ENCODE measurements at regions of chr1 and their contacts with region 1.

Region 1: GRCh38 chr1:29513357-29513756 is 277.0 kb downstream of the PTPRU start:
- DNase-seq: peak; percentile 67
- H3K4me3 ChIP-seq: no peak overlapping the region
- H3K27ac ChIP-seq: no peak overlapping the region
- H3K4me1 ChIP-seq: no peaks in the 10 kb centered on the region
- H3K27me3 ChIP-seq: no peaks in the 10 kb centered on the region
- CTCF ChIP-seq: peak; percentile 94 to 96

Region 2: DNA sequence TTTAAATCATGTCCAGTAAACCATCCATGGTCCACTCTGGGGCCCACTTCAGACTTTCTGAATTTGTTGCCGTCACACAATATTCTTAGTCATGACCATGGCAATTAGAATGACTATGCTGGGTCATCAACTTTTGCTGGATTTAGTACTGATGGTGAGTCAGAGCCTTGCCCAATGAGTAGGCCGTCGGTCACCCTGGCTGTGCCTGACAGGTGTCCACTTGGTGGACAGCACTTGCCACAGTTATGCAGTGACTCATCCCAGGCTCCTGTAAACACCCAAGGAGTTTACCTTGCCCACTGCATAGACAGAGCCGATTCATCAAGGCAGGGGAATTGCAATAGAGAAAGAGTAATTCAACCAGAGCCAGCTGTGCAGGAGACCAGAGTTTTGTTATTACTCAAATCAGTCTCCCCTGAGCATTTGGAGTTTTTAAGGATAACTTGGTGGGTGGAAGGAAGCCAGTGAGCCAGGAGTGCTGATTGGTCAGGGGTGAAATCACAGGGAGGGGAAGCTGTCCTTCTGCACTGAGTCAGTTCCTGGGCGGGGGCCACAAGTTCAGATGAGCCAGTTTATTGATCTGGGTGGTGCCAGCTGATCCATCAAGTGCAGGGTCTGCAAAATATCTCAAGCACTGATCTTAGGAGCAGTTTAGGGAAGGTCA is 56.7 kb after region 1 on chr1:
- CTCF ChIA-PET with region 1: no interaction called
- dilution Hi-C with region 1: no loop called
- in situ Hi-C with region 1: no loop called
- intact Hi-C with region 1: no loop called
- DNase-seq: peak; percentile 100
- H3K4me3 ChIP-seq: no peak overlapping the region
- H3K27ac ChIP-seq: peak overlapping the region; percentile 59
- H3K4me1 ChIP-seq: peaks cover 47% of the 10 kb centered on the region
- H3K27me3 ChIP-seq: no peaks in the 10 kb centered on the region
- CTCF ChIP-seq: no peak

Region 3: GRCh38 chr1:29698033-29698432 is 184.7 kb after region 1 on chr1:
- CTCF ChIA-PET with region 1: no interaction called
- dilution Hi-C with region 1: no loop called
- in situ Hi-C with region 1: loop called in 1 of 2 experiments (anchors 10 kb)
- intact Hi-C with region 1: loop called (anchors 1 kb)
- DNase-seq: peak; percentile 51
- H3K4me3 ChIP-seq: no peak overlapping the region
- H3K27ac ChIP-seq: no peak overlapping the region
- H3K4me1 ChIP-seq: no peaks in the 10 kb centered on the region
- H3K27me3 ChIP-seq: no peaks in the 10 kb centered on the region
- CTCF ChIP-seq: peak; percentile 63 to 67

Region 4: GRCh38 chr1:29793101-29793546 is 279.8 kb after region 1 on chr1:
- CTCF ChIA-PET with region 1: no interaction called
- dilution Hi-C with region 1: no loop called
- in situ Hi-C with region 1: no loop called
- intact Hi-C with region 1: loop called (anchors 1 kb)
- DNase-seq: peak; percentile 65
- H3K4me3 ChIP-seq: no peak overlapping the region
- H3K27ac ChIP-seq: no peak overlapping the region
- H3K4me1 ChIP-seq: peaks cover 9% of the 10 kb centered on the region
- H3K27me3 ChIP-seq: peaks cover 3% of the 10 kb centered on the region
- CTCF ChIP-seq: peak; percentile 94 to 97

Region 5: GRCh38 chr1:29912425-29912824 is 399.1 kb after region 1 on chr1:
- CTCF ChIA-PET with region 1: no interaction called
- dilution Hi-C with region 1: no loop called
- in situ Hi-C with region 1: no loop called
- intact Hi-C with region 1: loop called (anchors 1 kb)
- DNase-seq: peak; percentile 30
- H3K4me3 ChIP-seq: no peak overlapping the region
- H3K27ac ChIP-seq: no peak overlapping the region
- H3K4me1 ChIP-seq: no peaks in the 10 kb centered on the region
- H3K27me3 ChIP-seq: no peaks in the 10 kb centered on the region
- CTCF ChIP-seq: peak; percentile 41 to 67

Region 6: GRCh38 chr1:30099587-30100523 is 586.5 kb after region 1 on chr1:
- CTCF ChIA-PET with region 1: no interaction called
- dilution Hi-C with region 1: loop called (anchors 10 kb)
- in situ Hi-C with region 1: no loop called
- intact Hi-C with region 1: no loop called
- DNase-seq: no peak
- H3K4me3 ChIP-seq: no peak overlapping the region
- H3K27ac ChIP-seq: no peak overlapping the region
- H3K4me1 ChIP-seq: no peaks in the 10 kb centered on the region
- H3K27me3 ChIP-seq: no peaks in the 10 kb centered on the region
- CTCF ChIP-seq: no peak

Region 7: GRCh38 chr1:30707412-30708360 is 1194.3 kb after region 1 on chr1:
- CTCF ChIA-PET with region 1: no interaction called
- dilution Hi-C with region 1: no loop called
- in situ Hi-C with region 1: loop called in 1 of 2 experiments (anchors 25 kb)
- intact Hi-C with region 1: loop called (anchors 1 kb)
- DNase-seq: peak; percentile 49
- H3K4me3 ChIP-seq: no peak overlapping the region
- H3K27ac ChIP-seq: no peak overlapping the region
- H3K4me1 ChIP-seq: peaks cover 11% of the 10 kb centered on the region
- H3K27me3 ChIP-seq: no peaks in the 10 kb centered on the region
- CTCF ChIP-seq: peak; percentile 93 to 98